Dorsolateral prefrontal cortex (tissue), 120 donors: ENCODE measurements at regions of chr12 and their contacts with region 1.

Region 1: DNA sequence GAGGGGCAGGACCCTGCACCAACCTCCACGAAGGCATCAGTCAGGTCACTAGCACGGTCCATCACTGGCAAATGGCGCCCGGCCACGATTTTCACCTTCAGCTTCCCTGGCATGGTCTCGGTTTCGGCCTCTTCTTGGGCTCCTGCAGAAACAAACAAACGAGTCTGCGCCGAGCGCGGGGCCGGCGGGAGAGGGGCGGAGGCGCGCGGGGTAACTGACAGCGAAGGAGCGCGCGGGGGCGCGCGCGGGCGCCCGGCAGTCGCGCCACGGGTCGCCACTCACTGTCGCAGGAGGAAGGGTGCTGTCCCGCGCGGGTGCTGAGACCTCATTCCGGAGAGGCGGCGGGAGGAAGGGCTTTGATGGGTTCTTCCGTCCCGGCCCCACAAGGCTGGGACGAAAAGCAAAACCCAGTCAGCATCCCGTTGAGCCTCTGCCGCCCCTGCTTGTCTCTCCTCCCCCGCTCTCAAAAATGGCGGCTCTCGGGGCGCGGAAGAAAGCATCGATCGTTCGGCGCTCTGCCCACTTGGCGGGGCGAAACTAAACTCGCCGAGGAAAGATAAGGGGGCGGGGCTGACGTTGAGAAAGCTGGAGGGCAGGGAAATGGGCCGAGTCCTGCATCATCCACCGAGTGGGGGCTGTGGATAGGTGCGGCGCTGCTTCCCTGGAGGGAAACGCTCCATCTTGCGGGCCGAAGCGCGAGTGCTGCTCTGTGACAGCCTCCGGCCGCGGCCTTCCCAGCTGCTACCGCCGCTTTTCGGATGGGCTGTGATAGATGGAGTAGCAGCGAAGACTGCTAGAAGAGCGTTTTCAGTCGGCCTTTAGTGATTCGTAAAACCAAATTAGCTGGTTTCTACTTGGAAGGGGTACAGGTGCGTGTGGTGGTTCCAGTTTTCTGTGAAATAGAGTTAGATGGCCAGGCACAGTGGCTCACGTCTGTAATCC is at the start of gene C2CD5:
- DNase-seq: peak; percentile 88 to 97 (median 95)
- H3K4me3 ChIP-seq: peak within 1 kb of the TSS; percentile 67 to 98 (median 88)
- H3K27ac ChIP-seq: peak within 1 kb of the TSS; percentile 87 to 100 (median 98)
- H3K27me3 ChIP-seq: no peaks in the 10 kb centered on the region
- CTCF ChIP-seq: peak in 50 of 56 donors; percentile 5 to 69 (median 40)
- total RNA-seq, gene C2CD5: 66.3 to 190 (median 136) TPM

Region 2: GRCh38 chr12:22046090-22046967 is 498.0 kb before region 1 on chr12 and contains the start of gene CMAS:
- intact Hi-C with region 1: loop called in 1 of 2 experiments (anchors 5 kb)
- DNase-seq: peak; percentile 54 to 89 (median 73)
- H3K4me3 ChIP-seq: peak within 1 kb of the TSS; percentile 61 to 100 (median 96)
- H3K27ac ChIP-seq: peak within 1 kb of the TSS; percentile 18 to 97 (median 92)
- H3K27me3 ChIP-seq: no peaks in the 10 kb centered on the region
- CTCF ChIP-seq: peak in 17 of 56 donors; percentile 4 to 38 (median 15)
- total RNA-seq, gene CMAS: 33.3 to 101 (median 67.9) TPM

Region 3: DNA sequence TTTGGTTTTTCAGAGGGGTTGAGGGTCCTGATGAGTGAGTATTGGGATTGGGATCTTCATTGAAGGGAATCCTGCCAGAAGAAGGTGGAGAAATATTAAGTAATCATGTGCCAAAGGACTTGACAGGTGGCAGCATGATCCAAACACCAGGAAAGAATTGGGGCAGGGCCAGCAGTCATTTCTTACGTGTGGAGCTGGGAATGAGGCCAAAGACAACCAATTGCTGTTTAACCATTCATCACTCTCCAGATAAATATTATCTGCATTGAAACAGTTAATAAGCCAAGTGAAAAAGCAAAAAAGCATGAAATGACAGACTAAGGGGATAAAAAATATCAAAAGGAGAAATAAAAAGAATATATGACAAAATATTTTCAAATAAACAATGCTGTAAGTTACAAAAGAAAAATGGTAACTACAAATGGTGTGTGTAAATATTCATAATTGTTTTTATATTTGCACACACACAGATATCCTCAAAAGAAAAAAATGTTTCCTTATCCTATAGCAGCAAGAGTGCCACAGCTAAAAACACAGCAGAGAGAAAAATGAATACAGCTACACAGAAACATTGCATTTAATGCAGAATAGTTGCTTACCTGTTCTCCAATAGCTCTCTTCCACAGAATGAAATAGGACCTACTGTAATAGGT is 26.1 kb before region 1 on chr12:
- intact Hi-C with region 1: no loop called
- DNase-seq: peak in 1 of 10 donors; percentile 52
- H3K4me3 ChIP-seq: no peak overlapping the region
- H3K27ac ChIP-seq: peak overlapping the region in 1 of 59 donors; percentile 3
- H3K27me3 ChIP-seq: no peaks in the 10 kb centered on the region
- CTCF ChIP-seq: no peak

Region 4: GRCh38 chr12:22573181-22573580 is 28.9 kb after region 1 on chr12:
- intact Hi-C with region 1: no loop called
- DNase-seq: no peak
- H3K4me3 ChIP-seq: no peak overlapping the region
- H3K27ac ChIP-seq: no peak overlapping the region
- H3K27me3 ChIP-seq: no peaks in the 10 kb centered on the region
- CTCF ChIP-seq: no peak

Region 5: GRCh38 chr12:22624870-22625761 is 80.8 kb after region 1 on chr12 and contains the start of gene ETNK1:
- intact Hi-C with region 1: loop called (anchors 1 kb)
- DNase-seq: peak; percentile 95 to 99 (median 96)
- H3K4me3 ChIP-seq: peak within 1 kb of the TSS; percentile 66 to 99 (median 91)
- H3K27ac ChIP-seq: peak within 1 kb of the TSS; percentile 88 to 100 (median 99)
- H3K27me3 ChIP-seq: no peaks in the 10 kb centered on the region
- CTCF ChIP-seq: peak in 24 of 56 donors; percentile 5 to 51 (median 22)
- total RNA-seq, gene ETNK1: 57.3 to 161 (median 106) TPM